AG04449 (cell line): ENCODE measurements at regions of chr5 and their contacts with region 1.

Region 1: DNA sequence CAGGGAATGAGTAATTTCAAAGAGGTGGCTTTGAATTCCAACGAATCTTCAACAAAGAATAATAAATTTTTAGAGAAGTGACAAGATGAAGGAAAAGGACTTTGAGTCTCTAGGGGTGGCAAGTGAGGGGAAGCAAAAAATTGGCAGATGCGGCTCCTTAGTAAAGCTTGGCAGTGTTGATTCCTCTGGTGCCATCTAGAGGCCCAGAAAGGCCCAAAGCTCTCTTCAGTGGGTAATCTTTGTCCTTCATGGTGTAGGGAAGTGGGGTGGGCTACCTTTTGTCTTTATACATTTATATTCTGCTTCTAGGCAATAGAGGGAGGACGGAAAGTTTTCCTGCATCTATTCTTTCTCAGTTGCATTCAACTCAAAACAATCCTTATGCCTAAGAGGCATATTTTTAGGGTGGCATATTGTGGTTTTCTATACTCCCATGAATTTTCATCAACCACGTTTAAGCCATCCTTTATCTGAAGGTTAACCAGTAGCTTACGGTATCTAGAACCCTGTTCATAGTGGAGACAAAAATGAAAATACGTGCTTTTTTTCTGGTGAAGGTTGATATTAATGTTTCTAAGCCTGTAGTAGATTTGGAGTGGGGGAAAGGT is 17.5 kb upstream of the ROPN1L start:
- DNase-seq: no peak
- H3K4me3 ChIP-seq: no peak overlapping the region
- CTCF ChIP-seq: peak; percentile 54

Region 2: DNA sequence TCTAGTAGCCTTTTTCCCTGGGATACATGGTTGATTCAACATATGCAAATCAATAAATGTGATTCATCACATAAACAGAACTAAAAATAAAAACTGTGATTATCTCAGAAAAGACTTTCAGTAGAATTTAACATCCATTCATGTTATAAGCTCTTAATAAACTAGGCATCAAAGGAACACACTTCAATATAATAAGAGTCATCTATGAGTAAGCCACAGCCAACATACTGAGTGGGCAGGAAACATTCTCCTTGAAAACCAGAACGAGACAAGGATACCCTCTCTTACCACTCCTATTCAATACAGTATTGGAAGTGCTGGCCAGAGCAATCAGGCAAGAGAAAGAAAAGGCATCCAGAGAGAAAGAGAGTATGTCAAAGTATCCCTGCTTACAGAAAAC is 414.4 kb before region 1 on chr5:
- CTCF ChIA-PET with region 1: no interaction called
- POLR2A ChIA-PET with region 1: no interaction called
- DNase-seq: no peak
- H3K4me3 ChIP-seq: no peak overlapping the region
- CTCF ChIP-seq: no peak

Region 3: GRCh38 chr5:10434392-10434791 is 10.2 kb after region 1 on chr5:
- CTCF ChIA-PET with region 1: interaction called, 14 read pairs
- POLR2A ChIA-PET with region 1: no interaction called
- DNase-seq: no peak
- H3K4me3 ChIP-seq: no peak overlapping the region
- CTCF ChIP-seq: no peak

Region 4: GRCh38 chr5:11182441-11183268 is 758.4 kb after region 1 on chr5:
- CTCF ChIA-PET with region 1: no interaction called
- POLR2A ChIA-PET with region 1: no interaction called
- DNase-seq: peak; percentile 2
- H3K4me3 ChIP-seq: no peak overlapping the region
- CTCF ChIP-seq: peak; percentile 50